PC-3 (cell line): ENCODE measurements at regions of chr7 and their contacts with region 1.

Region 1: DNA sequence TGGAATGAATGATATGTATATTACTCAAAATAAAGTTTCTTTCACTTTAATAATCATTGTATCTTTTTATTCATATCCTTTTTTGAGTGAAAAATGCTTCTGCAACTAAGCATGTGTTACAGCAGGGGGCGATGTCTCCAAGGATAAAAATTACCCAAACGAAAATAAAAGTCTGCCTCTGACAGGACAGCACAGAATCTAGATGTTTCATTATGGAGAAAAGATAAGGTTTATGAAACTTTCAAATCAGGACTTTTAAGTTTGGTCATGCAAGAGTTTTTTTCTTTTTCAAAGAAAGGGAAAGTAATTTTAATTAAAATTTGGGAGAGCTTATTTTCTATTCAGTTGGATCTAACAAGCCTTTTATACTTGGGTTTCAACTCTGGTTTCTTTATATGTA is 48.4 kb downstream of the TES start:
- DNase-seq: peak; percentile 78
- ATAC-seq: 0 out of 2 replicates have a peak, but pooled peaks have one; percentile 16
- H3K4me3 ChIP-seq: no peak overlapping the region
- H3K27ac ChIP-seq: peak overlapping the region; percentile 34; the same call in 1 of the 2 replicates
- H3K4me1 ChIP-seq: peaks cover 18% of the 10 kb centered on the region
- H3K27me3 ChIP-seq: no peaks in the 10 kb centered on the region
- CTCF ChIP-seq: peak; percentile 89

Region 2: DNA sequence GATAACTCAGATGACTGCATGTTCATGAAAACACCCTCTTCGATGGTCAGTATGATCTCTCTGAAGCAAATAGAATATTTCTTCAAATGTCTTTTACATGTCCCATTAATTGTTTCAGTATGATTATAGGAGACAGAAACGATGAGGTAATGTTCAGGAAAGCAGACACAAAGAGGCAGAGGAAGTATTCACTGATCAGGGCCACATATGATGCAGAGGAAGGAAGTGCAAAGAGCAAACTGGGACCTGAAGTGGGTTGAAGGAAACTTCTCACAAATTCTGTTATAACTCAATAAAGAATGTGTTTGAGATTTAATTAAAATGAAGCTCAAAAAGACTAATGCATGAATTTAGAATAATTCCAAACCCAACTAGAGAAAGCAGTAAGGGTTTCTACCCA is 22.1 kb after region 1 on chr7:
- CTCF ChIA-PET with region 1: no interaction called
- POLR2A ChIA-PET with region 1: no interaction called
- intact Hi-C with region 1: no loop called
- DNase-seq: no peak
- ATAC-seq: no peak
- H3K4me3 ChIP-seq: no peak overlapping the region
- H3K27ac ChIP-seq: no peak overlapping the region
- H3K4me1 ChIP-seq: no peaks in the 10 kb centered on the region
- H3K27me3 ChIP-seq: no peaks in the 10 kb centered on the region
- CTCF ChIP-seq: no peak

Region 3: DNA sequence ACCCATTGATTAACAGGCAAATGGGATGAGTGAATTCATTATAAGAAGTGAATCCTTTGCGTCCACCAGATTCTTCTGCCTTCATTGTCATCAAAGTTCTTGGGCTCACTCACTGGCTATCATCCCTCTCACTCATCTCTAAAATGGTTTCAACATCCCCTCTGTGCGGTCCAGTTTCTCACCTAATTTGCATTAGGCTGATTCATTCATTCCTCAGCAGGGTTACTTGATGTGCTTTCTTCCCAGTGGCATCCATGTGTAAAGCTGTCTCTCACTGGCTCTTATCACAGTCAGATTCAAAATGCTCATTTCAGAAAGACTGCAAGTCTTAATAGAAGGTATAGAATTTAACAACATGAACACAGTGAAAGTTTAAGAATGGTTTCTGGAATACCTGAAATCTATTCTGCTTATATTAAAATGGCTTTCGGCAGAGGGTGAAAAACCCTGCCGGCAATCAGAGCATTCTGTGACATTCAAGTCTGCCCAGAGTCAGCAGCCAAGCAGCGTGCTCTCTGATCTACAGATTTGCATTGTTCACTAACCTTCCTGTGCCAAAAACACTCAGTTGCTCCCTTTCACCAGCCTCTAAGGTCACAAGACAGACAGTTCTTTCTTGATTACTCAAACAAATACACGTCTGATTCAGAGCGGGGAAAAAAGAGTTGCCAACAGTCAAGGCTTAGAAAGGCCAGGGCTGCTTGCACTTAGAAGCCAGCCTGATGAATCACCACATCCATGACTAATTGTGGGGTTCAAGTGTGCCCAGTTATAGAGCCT is 58.3 kb after region 1 on chr7:
- CTCF ChIA-PET with region 1: no interaction called
- POLR2A ChIA-PET with region 1: interaction called, 4 read pairs
- intact Hi-C with region 1: loop called (anchors 2 kb)
- DNase-seq: peak; percentile 98
- ATAC-seq: peak; percentile 93
- H3K4me3 ChIP-seq: peak overlapping the region; percentile 29
- H3K27ac ChIP-seq: peak overlapping the region; percentile 87
- H3K4me1 ChIP-seq: peaks cover 25% of the 10 kb centered on the region
- H3K27me3 ChIP-seq: no peaks in the 10 kb centered on the region
- CTCF ChIP-seq: no peak

Region 4: GRCh38 chr7:116354546-116355408 is 96.0 kb after region 1 on chr7:
- CTCF ChIA-PET with region 1: no interaction called
- POLR2A ChIA-PET with region 1: no interaction called
- intact Hi-C with region 1: loop called (anchors 2 kb)
- DNase-seq: peak; percentile 96
- ATAC-seq: peak; percentile 85
- H3K4me3 ChIP-seq: peak overlapping the region; percentile 51; the same call in 1 of the 2 replicates
- H3K27ac ChIP-seq: peak overlapping the region; percentile 91
- H3K4me1 ChIP-seq: peaks cover 51% of the 10 kb centered on the region
- H3K27me3 ChIP-seq: no peaks in the 10 kb centered on the region
- CTCF ChIP-seq: no peak

Region 5: GRCh38 chr7:116434820-116435341 is 176.1 kb after region 1 on chr7:
- CTCF ChIA-PET with region 1: interaction called, 12 read pairs
- POLR2A ChIA-PET with region 1: interaction called, 17 read pairs
- intact Hi-C with region 1: loop called (anchors 1 kb)
- DNase-seq: peak; percentile 85
- ATAC-seq: peak; percentile 97
- H3K4me3 ChIP-seq: peak overlapping the region; percentile 34; the same call in 1 of the 2 replicates
- H3K27ac ChIP-seq: peak overlapping the region; percentile 85
- H3K4me1 ChIP-seq: peaks cover 34% of the 10 kb centered on the region
- H3K27me3 ChIP-seq: no peaks in the 10 kb centered on the region
- CTCF ChIP-seq: no peak

Region 6: DNA sequence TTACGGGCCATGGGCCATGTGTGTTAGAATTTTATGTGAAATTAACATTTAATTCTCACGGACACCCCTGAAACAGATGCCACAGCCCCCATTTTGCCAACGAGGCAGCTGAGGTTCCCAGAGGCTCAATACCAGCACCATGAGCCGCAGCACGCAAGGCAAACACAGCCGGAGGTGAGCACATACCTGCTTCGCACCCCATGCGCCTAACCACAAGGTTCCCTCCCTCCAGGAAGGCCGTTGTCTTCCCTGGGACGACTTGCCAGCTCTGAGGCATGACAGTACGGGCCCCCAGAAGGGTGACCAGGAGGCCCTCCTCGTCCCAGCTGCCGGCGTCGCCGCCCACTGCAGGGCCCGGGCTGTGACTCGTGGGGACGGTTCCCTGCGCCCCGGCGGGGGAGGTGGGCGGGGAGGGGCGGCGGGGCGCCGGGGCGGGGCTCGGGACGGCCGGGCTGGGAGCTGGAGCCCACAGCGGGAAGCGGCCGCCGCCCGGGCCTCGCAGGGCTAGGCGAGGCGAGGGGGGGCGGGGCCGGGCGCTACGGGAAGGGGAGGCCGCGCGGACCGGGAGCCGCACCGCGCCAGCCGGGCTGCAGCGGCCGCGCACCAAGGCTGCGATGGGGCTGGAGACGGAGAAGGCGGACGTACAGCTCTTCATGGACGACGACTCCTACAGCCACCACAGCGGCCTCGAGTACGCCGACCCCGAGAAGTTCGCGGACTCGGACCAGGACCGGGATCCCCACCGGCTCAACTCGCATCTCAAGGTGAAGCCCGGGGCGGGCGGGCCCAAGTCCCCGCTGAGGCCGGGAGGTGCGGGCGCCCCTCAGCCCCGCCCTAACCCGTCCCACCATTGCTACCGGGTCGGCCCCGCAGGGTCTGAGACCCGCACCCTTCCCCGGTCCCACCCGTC is 240.7 kb after region 1 on chr7 and contains the start of gene CAV2:
- CTCF ChIA-PET with region 1: interaction called, 14 read pairs
- POLR2A ChIA-PET with region 1: no interaction called
- intact Hi-C with region 1: no loop called
- DNase-seq: peak; percentile 92
- ATAC-seq: peak; percentile 79
- H3K4me3 ChIP-seq: peak within 1 kb of the TSS; percentile 89
- H3K27ac ChIP-seq: peak within 1 kb of the TSS; percentile 79
- H3K4me1 ChIP-seq: peaks cover 37% of the 10 kb centered on the region
- H3K27me3 ChIP-seq: no peaks in the 10 kb centered on the region
- CTCF ChIP-seq: no peak
- total RNA-seq, gene CAV2: 76.6 and 84.4 TPM in 2 replicates

Region 7: DNA sequence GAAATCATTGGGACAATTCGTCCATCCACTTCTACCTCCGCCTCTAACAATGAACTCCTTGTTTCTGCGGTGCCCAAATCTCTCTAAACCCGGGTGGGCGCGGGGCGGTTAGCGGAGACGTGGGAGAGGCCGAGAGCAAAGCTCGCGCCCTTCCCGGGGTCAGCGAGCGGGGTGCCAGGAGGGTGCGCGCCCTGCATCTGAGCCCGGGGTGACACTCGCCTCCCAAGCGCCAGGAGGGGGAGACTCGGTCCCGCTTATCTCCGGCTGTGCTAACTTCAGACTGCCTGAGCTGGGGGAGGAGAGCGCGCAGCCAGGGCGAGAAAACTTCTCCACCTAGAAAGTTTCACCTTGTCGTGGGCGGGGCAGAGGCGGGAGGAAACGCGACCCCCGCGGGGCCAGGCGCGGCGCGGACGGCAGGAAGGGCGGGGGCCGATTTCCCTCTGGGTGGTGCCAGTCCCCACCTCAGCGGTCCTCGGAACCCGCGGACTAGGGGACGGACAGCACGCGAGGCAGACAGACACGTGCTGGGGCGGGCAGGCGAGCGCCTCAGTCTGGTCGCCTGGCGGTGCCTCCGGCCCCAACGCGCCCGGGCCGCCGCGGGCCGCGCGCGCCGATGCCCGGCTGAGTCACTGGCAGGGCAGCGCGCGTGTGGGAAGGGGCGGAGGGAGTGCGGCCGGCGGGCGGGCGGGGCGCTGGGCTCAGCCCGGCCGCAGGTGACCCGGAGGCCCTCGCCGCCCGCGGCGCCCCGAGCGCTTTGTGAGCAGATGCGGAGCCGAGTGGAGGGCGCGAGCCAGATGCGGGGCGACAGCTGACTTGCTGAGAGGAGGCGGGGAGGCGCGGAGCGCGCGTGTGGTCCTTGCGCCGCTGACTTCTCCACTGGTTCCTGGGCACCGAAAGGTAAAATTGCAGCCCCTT is 413.2 kb after region 1 on chr7 and contains the start of gene MET:
- CTCF ChIA-PET with region 1: no interaction called
- POLR2A ChIA-PET with region 1: no interaction called
- intact Hi-C with region 1: loop called (anchors 2 kb)
- DNase-seq: peak; percentile 90
- ATAC-seq: peak; percentile 76
- H3K4me3 ChIP-seq: peak within 1 kb of the TSS; percentile 99
- H3K27ac ChIP-seq: peak within 1 kb of the TSS; percentile 93
- H3K4me1 ChIP-seq: peaks cover 28% of the 10 kb centered on the region
- H3K27me3 ChIP-seq: no peaks in the 10 kb centered on the region
- CTCF ChIP-seq: peak; percentile 71
- total RNA-seq, gene MET: 109 and 118 TPM in 2 replicates